Endothelial cell of umbilical vein (primary cell): ENCODE measurements at regions of chr2 and their contacts with region 1.

Region 1: GRCh38 chr2:165015052-165015642 is 59.8 kb upstream of the SLC38A11 start:
- DNase-seq: peak; percentile 61
- H3K4me3 ChIP-seq: no peak overlapping the region
- H3K27ac ChIP-seq: no peak overlapping the region
- H3K4me1 ChIP-seq: no peaks in the 10 kb centered on the region
- H3K27me3 ChIP-seq: peaks cover 16 to 23% of the 10 kb centered on the region in 2 experiments
- CTCF ChIP-seq: peak; percentile 78 to 91
- POLR2A ChIP-seq: no peak

Region 2: GRCh38 chr2:164737612-164738081 is 277.5 kb before region 1 on chr2:
- CTCF ChIA-PET with region 1: interaction called, 7 read pairs
- POLR2A ChIA-PET with region 1: no interaction called
- dilution Hi-C with region 1: no loop called
- intact Hi-C with region 1: loop called (anchors 1 kb)
- DNase-seq: peak; percentile 82
- H3K4me3 ChIP-seq: no peak overlapping the region
- H3K27ac ChIP-seq: no peak overlapping the region
- H3K4me1 ChIP-seq: peaks cover 8% of the 10 kb centered on the region
- H3K27me3 ChIP-seq: no peaks in the 10 kb centered on the region
- CTCF ChIP-seq: peak; percentile 48 to 61
- POLR2A ChIP-seq: no peak

Region 3: GRCh38 chr2:165003433-165004130 is 11.6 kb before region 1 on chr2:
- CTCF ChIA-PET with region 1: interaction called, 22 read pairs
- POLR2A ChIA-PET with region 1: no interaction called
- dilution Hi-C with region 1: no loop called
- intact Hi-C with region 1: no loop called
- DNase-seq: no peak
- H3K4me3 ChIP-seq: no peak overlapping the region
- H3K27ac ChIP-seq: no peak overlapping the region
- H3K4me1 ChIP-seq: no peaks in the 10 kb centered on the region
- H3K27me3 ChIP-seq: peaks cover 6 to 11% of the 10 kb centered on the region in 2 experiments
- CTCF ChIP-seq: no peak
- POLR2A ChIP-seq: no peak

Region 4: DNA sequence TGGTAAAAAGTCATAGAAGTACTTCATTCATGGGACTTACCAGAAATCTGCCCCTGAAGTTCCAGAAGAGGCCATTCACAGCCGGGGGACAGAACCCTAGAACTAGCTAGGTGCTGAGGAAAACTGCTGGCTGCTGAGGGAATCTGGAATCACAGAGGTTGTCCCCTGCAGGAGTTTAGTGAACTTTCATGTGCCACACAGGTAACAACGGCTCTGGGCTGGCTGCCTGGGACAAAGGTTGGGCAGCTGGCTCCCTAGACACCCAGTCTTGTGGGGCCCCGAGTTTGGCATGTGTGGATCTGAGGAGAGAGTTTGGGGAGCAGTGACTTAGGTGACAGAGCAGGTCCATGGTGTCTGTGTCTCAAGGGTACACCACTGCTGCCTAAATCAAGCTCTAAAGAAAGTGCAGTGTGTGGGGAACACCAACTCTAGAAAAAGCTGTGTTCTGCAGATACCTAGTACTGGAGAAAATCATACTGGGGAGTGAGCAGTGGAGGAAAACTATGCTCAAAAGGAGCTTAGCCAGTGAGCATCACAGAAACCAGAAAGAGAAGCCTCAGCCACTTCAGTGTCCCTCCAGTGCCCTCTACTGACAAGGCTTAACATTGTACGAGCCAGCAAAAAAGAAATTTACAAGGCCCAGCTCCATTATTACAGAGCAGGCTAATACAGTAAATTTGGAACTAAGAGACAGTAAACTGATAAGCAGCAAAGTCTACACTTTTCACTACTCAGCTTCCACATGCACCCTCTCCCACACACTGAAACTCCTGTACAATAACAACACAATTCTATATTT is 763.7 kb after region 1 on chr2:
- CTCF ChIA-PET with region 1: interaction called, 13 read pairs
- POLR2A ChIA-PET with region 1: no interaction called
- dilution Hi-C with region 1: no loop called
- intact Hi-C with region 1: loop called (anchors 10 kb)
- DNase-seq: peak; percentile 7
- H3K4me3 ChIP-seq: no peak overlapping the region
- H3K27ac ChIP-seq: no peak overlapping the region
- H3K4me1 ChIP-seq: no peaks in the 10 kb centered on the region
- H3K27me3 ChIP-seq: no peaks in the 10 kb centered on the region
- CTCF ChIP-seq: peak; percentile 20 to 23
- POLR2A ChIP-seq: no peak